Naive thymus-derived CD4-positive, alpha-beta T cell (primary cell): ENCODE measurements at regions of chr5 and their contacts with region 1.

Region 1: GRCh38 chr5:154038707-154039457 is at the starts of genes FAM114A2 and MFAP3:
- DNase-seq: peak; percentile 74 to 87 (median 84)
- ATAC-seq: peak; percentile 98
- H3K4me3 ChIP-seq: peak within 1 kb of the TSS; percentile 93
- H3K4me3 Mint-ChIP-seq: peak within 1 kb of the TSS; percentile 91 to 99 (median 98)
- H3K27ac ChIP-seq: peak within 1 kb of the TSS; percentile 80
- H3K27ac Mint-ChIP-seq: peak within 1 kb of the TSS; percentile 96 to 99 (median 97)
- H3K4me1 ChIP-seq: peaks cover 11 to 21% of the 10 kb centered on the region in 2 donors
- H3K4me1 Mint-ChIP-seq: peaks cover 37 to 78% (median 76%) of the 10 kb centered on the region in 7 donors
- H3K27me3 ChIP-seq: no peaks in the 10 kb centered on the region
- H3K27me3 Mint-ChIP-seq: no peaks in the 10 kb centered on the region
- total RNA-seq, gene FAM114A2: 26.2 to 53.1 (median 37.1) TPM
- total RNA-seq, gene MFAP3: 11.1 to 30.6 (median 28.1) TPM

Region 2: GRCh38 chr5:152527358-152528052 is 1511.4 kb before region 1 on chr5:
- CTCF ChIA-PET with region 1: no interaction called
- POLR2A ChIA-PET with region 1: no interaction called
- intact Hi-C with region 1: loop called in 1 of 2 experiments (anchors 1 kb)
- DNase-seq: no peak
- ATAC-seq: no peak
- H3K4me3 ChIP-seq: no peak overlapping the region
- H3K4me3 Mint-ChIP-seq: peak overlapping the region in 8 of 10 donors; percentile 23 to 73 (median 48)
- H3K27ac ChIP-seq: no peak overlapping the region
- H3K27ac Mint-ChIP-seq: peak overlapping the region in 8 of 9 donors; percentile 1 to 82 (median 40)
- H3K4me1 ChIP-seq: peaks cover 7 to 12% of the 10 kb centered on the region in 2 donors
- H3K4me1 Mint-ChIP-seq: peaks cover 10 to 28% (median 21%) of the 10 kb centered on the region in 7 donors
- H3K27me3 ChIP-seq: no peaks in the 10 kb centered on the region
- H3K27me3 Mint-ChIP-seq: peaks cover 0 to 40% (median 0%) of the 10 kb centered on the region in 5 donors

Region 3: GRCh38 chr5:154000703-154001102 is 38.2 kb before region 1 on chr5:
- CTCF ChIA-PET with region 1: no interaction called
- POLR2A ChIA-PET with region 1: interaction called, 3 read pairs
- intact Hi-C with region 1: loop called in 1 of 2 experiments (anchors 1 kb)
- DNase-seq: no peak
- ATAC-seq: no peak
- H3K4me3 ChIP-seq: no peak overlapping the region
- H3K4me3 Mint-ChIP-seq: no peak overlapping the region
- H3K27ac ChIP-seq: no peak overlapping the region
- H3K27ac Mint-ChIP-seq: no peak overlapping the region
- H3K4me1 ChIP-seq: no peaks in the 10 kb centered on the region
- H3K4me1 Mint-ChIP-seq: no peaks in the 10 kb centered on the region
- H3K27me3 ChIP-seq: no peaks in the 10 kb centered on the region
- H3K27me3 Mint-ChIP-seq: no peaks in the 10 kb centered on the region

Region 4: DNA sequence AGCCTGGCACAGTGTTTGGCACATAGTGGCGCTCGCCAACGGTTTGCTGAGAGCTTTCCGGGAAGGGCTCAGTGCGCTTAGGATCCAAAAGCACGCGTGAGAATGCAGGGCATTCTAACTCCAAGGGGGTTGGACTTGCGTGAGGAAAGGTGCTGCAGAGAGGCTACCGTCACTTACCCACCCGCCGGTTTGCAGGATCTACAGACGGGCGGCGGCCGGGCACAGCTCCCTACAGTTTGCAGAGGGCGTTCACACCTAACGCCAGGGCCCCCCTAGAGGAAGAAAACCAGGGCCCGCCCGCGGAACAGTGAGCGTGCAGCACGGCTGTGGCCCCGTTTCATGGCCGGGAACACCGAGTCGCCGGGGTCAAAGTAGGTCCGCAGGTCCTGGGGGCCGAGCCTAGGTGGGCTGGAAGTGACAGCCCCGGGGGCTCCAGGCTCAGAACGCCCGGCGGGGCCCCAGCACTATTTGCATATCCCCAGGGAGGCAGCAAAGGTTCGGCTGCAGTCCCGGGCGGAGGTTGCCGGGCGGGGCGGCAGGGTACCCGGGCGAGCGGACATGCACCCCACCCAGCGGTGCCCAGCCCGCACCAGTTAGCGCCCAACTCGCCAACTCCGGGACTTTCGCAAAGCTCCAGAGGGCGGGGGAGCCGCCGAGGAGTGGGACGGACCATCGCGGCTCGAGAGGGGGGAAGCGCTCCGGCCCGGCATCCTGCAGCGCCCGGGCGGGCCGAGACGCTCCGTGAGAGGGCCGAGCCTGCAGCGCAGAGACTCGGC is 151.1 kb after region 1 on chr5:
- CTCF ChIA-PET with region 1: no interaction called
- POLR2A ChIA-PET with region 1: interaction called, 26 read pairs
- intact Hi-C with region 1: loop called (anchors 1 kb)
- DNase-seq: peak; percentile 63 to 82 (median 79)
- ATAC-seq: peak; percentile 93
- H3K4me3 ChIP-seq: peak overlapping the region; percentile 94
- H3K4me3 Mint-ChIP-seq: peak overlapping the region; percentile 82 to 93 (median 88)
- H3K27ac ChIP-seq: peak overlapping the region; percentile 80
- H3K27ac Mint-ChIP-seq: peak overlapping the region; percentile 71 to 83 (median 78)
- H3K4me1 ChIP-seq: peaks cover 16 to 22% of the 10 kb centered on the region in 2 donors
- H3K4me1 Mint-ChIP-seq: peaks cover 33 to 49% (median 41%) of the 10 kb centered on the region in 7 donors
- H3K27me3 ChIP-seq: no peaks in the 10 kb centered on the region
- H3K27me3 Mint-ChIP-seq: peaks cover 0 to 12% (median 0%) of the 10 kb centered on the region in 5 donors

Region 5: DNA sequence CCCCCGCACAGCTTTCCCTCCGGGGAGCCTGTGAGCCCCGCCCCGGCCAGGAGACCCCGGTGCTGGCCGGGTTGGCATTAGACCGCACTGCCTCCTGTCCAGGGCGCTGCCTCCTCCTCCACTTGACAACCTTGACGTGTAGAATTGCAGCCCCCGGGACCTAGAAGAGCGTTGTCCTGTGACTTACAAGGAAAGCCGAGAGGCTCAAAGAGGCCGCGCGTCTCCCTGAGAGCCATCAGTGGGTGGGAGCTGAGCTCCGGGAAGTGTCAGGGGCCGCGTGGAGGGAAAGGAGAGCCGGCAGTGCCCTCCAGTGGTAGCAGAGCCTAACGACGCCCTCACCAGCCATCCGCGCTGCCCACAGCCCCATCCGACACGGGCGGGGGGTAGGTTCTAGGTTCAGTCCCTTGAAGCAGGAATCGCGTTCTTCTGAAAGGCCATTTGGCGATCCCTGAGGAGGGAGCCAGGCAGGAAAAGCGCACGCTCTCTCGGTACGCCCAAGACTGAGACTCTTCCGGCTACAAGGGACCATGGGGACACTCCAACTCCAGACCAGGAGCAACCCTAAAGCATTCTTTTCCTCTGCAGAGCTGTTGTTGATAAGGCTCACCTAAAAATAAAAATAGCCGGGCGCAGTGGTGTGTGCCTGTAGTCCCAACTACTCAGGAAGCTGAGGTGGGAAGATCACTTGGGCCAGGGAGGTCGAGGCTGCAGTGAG is 366.4 kb after region 1 on chr5:
- CTCF ChIA-PET with region 1: interaction called, 4 read pairs
- POLR2A ChIA-PET with region 1: no interaction called
- intact Hi-C with region 1: loop called in 1 of 2 experiments (anchors 1 kb)
- DNase-seq: peak; percentile 31 to 75 (median 61)
- ATAC-seq: peak; percentile 96
- H3K4me3 ChIP-seq: peak overlapping the region; percentile 33
- H3K4me3 Mint-ChIP-seq: peak overlapping the region; percentile 35 to 80 (median 65)
- H3K27ac ChIP-seq: no peak overlapping the region
- H3K27ac Mint-ChIP-seq: peak overlapping the region in 3 of 9 donors; percentile 18 to 73 (median 32)
- H3K4me1 ChIP-seq: peaks cover 4 to 8% of the 10 kb centered on the region in 2 donors
- H3K4me1 Mint-ChIP-seq: peaks cover 0 to 15% (median 10%) of the 10 kb centered on the region in 7 donors
- H3K27me3 ChIP-seq: no peaks in the 10 kb centered on the region
- H3K27me3 Mint-ChIP-seq: no peaks in the 10 kb centered on the region

Region 6: DNA sequence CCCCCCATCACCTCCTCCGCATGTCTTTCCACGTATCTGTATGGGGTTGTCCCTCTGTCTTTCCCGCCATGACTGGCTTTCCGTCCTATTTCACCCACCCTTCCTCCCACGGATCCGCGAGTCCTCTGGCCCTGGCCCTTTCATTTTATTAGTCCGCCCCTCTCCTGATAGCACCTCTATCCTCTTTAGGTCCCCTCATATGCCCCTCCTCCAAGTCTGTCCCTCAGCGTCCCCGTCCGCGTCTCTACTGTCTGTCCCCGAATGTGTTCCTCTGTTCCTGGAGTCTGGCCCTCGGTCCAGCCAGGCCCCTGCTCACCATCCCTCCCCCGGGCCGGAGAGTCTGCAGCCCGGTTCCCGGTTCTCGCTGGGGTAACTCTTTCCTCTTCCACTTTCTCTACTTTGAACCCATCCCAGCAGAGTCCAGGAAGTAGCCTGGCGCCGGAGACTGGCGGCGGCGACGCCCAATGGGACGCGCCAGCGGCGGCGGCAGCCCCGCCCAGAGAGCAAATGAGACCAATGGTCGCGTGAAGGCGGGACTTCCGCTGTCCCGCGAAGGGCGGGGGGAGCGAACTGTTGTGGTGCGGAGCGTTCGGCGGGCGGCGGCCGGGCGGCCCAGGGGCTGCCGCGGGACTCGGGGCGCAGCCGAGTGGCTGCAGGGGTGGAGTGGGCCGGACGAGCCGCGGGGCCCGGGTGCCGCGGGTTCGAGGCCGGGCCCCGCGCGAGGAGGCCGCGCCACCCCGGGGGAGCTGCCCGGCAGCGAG is 406.7 kb after region 1 on chr5 and contains the start of gene SAP30L:
- CTCF ChIA-PET with region 1: no interaction called
- POLR2A ChIA-PET with region 1: no interaction called
- intact Hi-C with region 1: loop called (anchors 1 kb)
- DNase-seq: peak; percentile 92 to 99 (median 97)
- ATAC-seq: peak; percentile 97
- H3K4me3 ChIP-seq: peak within 1 kb of the TSS; percentile 90
- H3K4me3 Mint-ChIP-seq: peak within 1 kb of the TSS; percentile 94 to 100 (median 99)
- H3K27ac ChIP-seq: peak within 1 kb of the TSS; percentile 83
- H3K27ac Mint-ChIP-seq: peak within 1 kb of the TSS; percentile 88 to 98 (median 95)
- H3K4me1 ChIP-seq: peaks cover 16 to 35% of the 10 kb centered on the region in 2 donors
- H3K4me1 Mint-ChIP-seq: peaks cover 32 to 74% (median 61%) of the 10 kb centered on the region in 7 donors
- H3K27me3 ChIP-seq: no peaks in the 10 kb centered on the region
- H3K27me3 Mint-ChIP-seq: no peaks in the 10 kb centered on the region
- total RNA-seq, gene SAP30L: 31.1 to 45.7 (median 35.9) TPM